ENCODE measurements at regions of chr11 and their contacts with region 1.

Region 1: DNA sequence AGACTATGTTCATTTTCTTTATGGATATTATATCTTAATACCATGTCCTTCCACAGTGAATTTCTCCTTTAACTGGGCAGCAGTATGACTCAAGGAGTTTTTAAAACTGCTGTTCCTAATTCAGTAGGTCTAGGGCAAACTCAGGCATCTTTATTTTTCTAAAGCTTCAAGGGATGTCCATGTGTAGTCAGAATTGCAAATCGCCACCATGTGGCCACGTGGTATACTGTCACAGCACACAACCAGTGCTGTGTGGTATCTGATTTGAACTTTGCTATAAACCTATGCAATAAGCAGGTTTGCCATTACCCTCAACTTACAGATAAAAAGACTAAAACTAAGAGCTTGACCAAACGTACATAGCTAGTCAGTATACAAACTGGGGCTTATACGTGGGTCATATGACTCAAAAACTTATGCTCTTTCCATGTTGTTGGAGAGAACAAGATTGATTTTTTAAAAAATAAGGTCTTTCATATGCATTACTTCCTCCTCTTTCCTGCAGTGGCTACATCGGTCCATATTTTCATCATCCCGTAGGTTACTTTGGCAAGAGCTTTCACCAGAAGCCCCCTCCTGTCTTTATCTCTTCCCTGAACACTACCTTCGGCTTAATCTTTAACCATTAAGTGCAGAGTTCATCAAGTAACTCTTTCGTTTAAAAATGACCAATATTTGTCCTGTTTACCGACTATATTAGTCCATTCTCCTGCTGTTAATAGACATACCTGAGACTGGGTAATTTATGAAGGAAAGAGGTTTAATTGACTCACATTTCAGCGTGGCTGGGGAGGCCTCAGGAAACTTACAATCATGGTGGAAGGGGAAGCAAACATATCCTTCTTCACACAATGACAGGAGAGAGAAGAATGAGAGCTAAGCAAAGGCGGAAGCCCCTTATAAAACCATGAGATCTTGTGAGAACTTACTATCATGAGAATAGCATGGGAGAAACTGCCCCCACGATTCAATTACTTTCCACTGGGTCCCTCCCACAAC is 8.0 kb upstream of the HTATIP2 start:
- DNase-seq: peak; percentile 52 to 63
- ATAC-seq: peak; percentile 92 to 94
- H3K4me3 ChIP-seq: no peak overlapping the region
- H3K27ac ChIP-seq: no peak overlapping the region
- H3K4me1 ChIP-seq: peaks cover 13% of the 10 kb centered on the region
- CTCF ChIP-seq: peak; percentile 57
- EP300 ChIP-seq: no peak
- POLR2A ChIP-seq: no peak
- RAD21 ChIP-seq: peak; percentile 27 to 35; a peak in 3 of 5 replicates

Region 2: GRCh38 chr11:20337526-20338154 is 17.9 kb before region 1 on chr11:
- CTCF ChIA-PET with region 1: interaction called, 12 read pairs
- POLR2A ChIA-PET with region 1: no interaction called
- DNase-seq: peak; percentile 38 to 42
- ATAC-seq: peak; percentile 86 to 89; a peak in 5 of 6 replicates
- H3K4me3 ChIP-seq: no peak overlapping the region
- H3K27ac ChIP-seq: no peak overlapping the region
- H3K4me1 ChIP-seq: no peaks in the 10 kb centered on the region
- CTCF ChIP-seq: peak; percentile 63
- EP300 ChIP-seq: no peak
- POLR2A ChIP-seq: no peak
- RAD21 ChIP-seq: peak; percentile 67 to 70

Region 3: DNA sequence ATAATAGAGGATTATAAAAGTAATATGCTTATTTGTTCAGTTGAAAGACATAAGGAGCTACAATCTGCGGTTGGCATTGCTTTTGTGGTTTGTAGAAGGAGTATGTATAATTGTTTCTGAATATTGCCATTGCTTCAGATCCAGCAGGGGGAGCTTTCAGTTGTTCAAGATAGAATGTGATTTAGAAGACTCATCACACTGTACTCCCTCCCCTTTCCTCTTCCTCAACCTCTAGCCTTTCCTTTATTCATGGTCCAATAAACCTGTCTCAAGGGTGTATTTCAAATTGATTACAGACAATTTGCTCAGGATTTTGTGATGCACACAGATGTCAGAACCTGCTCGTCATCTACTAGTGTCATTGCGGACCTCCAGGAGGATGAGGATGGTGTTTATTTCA is 41.8 kb after region 1 on chr11:
- CTCF ChIA-PET with region 1: no interaction called
- POLR2A ChIA-PET with region 1: no interaction called
- DNase-seq: peak; percentile 38 to 69
- ATAC-seq: peak; percentile 96 to 99
- H3K4me3 ChIP-seq: no peak overlapping the region
- H3K27ac ChIP-seq: no peak overlapping the region
- H3K4me1 ChIP-seq: no peaks in the 10 kb centered on the region
- CTCF ChIP-seq: peak; percentile 67
- EP300 ChIP-seq: no peak
- POLR2A ChIP-seq: no peak
- RAD21 ChIP-seq: peak; percentile 41 to 51; a peak in 4 of 5 replicates

Region 4: DNA sequence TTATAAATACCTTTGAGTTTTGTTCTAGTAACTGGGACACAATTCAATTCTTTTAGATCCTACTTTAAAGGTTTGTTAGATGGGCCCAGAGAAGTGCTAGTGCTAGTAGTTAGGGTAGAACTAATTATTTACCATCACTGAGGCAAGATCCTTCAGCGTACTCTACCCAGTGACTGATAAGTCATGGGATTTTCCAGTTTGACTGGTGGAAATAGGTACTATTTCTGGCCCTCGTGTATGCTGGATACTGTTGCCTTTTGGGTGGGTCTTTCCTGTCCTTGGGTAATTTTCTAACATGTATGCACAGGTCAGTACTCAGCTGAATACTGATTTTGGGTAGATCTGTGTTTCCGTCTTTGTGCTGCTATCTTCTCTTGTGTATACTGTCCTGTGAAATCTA is 329.2 kb after region 1 on chr11:
- CTCF ChIA-PET with region 1: no interaction called
- POLR2A ChIA-PET with region 1: no interaction called
- DNase-seq: no peak
- ATAC-seq: no peak
- H3K4me3 ChIP-seq: no peak overlapping the region
- H3K27ac ChIP-seq: no peak overlapping the region
- H3K4me1 ChIP-seq: no peaks in the 10 kb centered on the region
- CTCF ChIP-seq: no peak
- EP300 ChIP-seq: no peak
- POLR2A ChIP-seq: no peak
- RAD21 ChIP-seq: no peak

Measured in A549 (cell line).